Activated T-helper 1 cell treated with anti-CD3 and anti-CD28 coated beads, Interleukin-12 subunit alpha, Interleukin-12 subunit beta, Interleukin-2, Interleukin-4 antibody, amounts not matched to agents 30 ng/mL and 10 ng/mL and 1 ng/mL, durations not matched to agents 14 hours and 24 hours and 36 hours (primary cell): ENCODE measurements at regions of chr6 and their contacts with region 1.

Region 1: GRCh38 chr6:52399511-52400312 is 20.4 kb upstream of the EFHC1 start:
- DNase-seq: no peak
- H3K4me3 Mint-ChIP-seq: peak overlapping the region; percentile 42
- H3K27ac Mint-ChIP-seq: peak overlapping the region; percentile 38
- H3K4me1 Mint-ChIP-seq: peaks cover 52% of the 10 kb centered on the region
- H3K27me3 Mint-ChIP-seq: peaks cover 5% of the 10 kb centered on the region

Region 2: GRCh38 chr6:52297433-52297832 is 102.3 kb before region 1 on chr6:
- intact Hi-C with region 1: loop called (anchors 2 kb)
- DNase-seq: no peak
- H3K4me3 Mint-ChIP-seq: peak overlapping the region; percentile 23
- H3K27ac Mint-ChIP-seq: peak overlapping the region; percentile 53
- H3K4me1 Mint-ChIP-seq: peaks cover 40% of the 10 kb centered on the region
- H3K27me3 Mint-ChIP-seq: no peaks in the 10 kb centered on the region

Region 3: GRCh38 chr6:52352239-52353008 is 47.3 kb before region 1 on chr6:
- intact Hi-C with region 1: no loop called
- DNase-seq: no peak
- H3K4me3 Mint-ChIP-seq: no peak overlapping the region
- H3K27ac Mint-ChIP-seq: no peak overlapping the region
- H3K4me1 Mint-ChIP-seq: peaks cover 20% of the 10 kb centered on the region
- H3K27me3 Mint-ChIP-seq: peaks cover 9% of the 10 kb centered on the region

Region 4: GRCh38 chr6:52503848-52504781 is 104.4 kb after region 1 on chr6:
- intact Hi-C with region 1: no loop called
- DNase-seq: no peak
- H3K4me3 Mint-ChIP-seq: no peak overlapping the region
- H3K27ac Mint-ChIP-seq: no peak overlapping the region
- H3K4me1 Mint-ChIP-seq: no peaks in the 10 kb centered on the region
- H3K27me3 Mint-ChIP-seq: no peaks in the 10 kb centered on the region

Region 5: GRCh38 chr6:52517502-52518278 is 118.0 kb after region 1 on chr6:
- intact Hi-C with region 1: no loop called
- DNase-seq: peak; percentile 11
- H3K4me3 Mint-ChIP-seq: no peak overlapping the region
- H3K27ac Mint-ChIP-seq: no peak overlapping the region
- H3K4me1 Mint-ChIP-seq: peaks cover 43% of the 10 kb centered on the region
- H3K27me3 Mint-ChIP-seq: no peaks in the 10 kb centered on the region

Region 6: DNA sequence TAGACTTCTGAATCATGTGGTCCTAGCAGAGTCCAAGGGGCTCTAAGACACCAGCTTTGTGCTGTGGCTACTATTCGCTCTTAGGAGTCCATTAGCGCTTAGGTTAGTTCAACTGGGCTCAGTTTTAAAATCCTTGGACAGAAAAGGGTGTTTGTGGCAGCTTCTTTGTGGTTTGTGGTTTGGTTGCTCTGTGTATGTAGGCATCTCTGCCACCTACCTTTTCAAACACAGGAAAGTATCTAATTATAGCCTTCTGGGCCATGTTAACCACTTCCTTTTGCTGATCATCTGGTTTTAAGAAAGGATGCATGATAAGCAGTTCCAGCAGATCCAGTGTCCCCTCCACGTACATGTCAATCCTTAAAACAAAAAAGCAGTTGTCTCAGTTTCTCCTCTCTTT is 584.5 kb after region 1 on chr6:
- intact Hi-C with region 1: loop called (anchors 5 kb)
- DNase-seq: peak; percentile 47
- H3K4me3 Mint-ChIP-seq: peak overlapping the region; percentile 44
- H3K27ac Mint-ChIP-seq: peak overlapping the region; percentile 78
- H3K4me1 Mint-ChIP-seq: peaks cover 71% of the 10 kb centered on the region
- H3K27me3 Mint-ChIP-seq: peaks cover 6% of the 10 kb centered on the region